ENCODE measurements at regions of chr2 and their contacts with region 1.

Region 1: GRCh38 chr2:177164584-177165052 is 48.0 kb upstream of the HNRNPA3 start:
- DNase-seq: peak; percentile 78
- H3K4me3 ChIP-seq: peak overlapping the region; percentile 35 to 59
- H3K27ac ChIP-seq: peak overlapping the region; percentile 39 to 43; a peak in 3 of 4 replicates
- H3K4me1 ChIP-seq: peaks cover 12 to 24% of the 10 kb centered on the region in 2 experiments; a peak in 3 of 4 replicates
- H3K27me3 ChIP-seq: no peaks in the 10 kb centered on the region
- CTCF ChIP-seq: peak; percentile 100
- EP300 ChIP-seq: peak in 1 of 2 experiments; percentile 11; a peak in 1 of 4 replicates
- RAD21 ChIP-seq: peak; percentile 99

Region 2: GRCh38 chr2:177183860-177184259 is 19.2 kb after region 1 on chr2:
- CTCF ChIA-PET with region 1: interaction called, 35 read pairs
- POLR2A ChIA-PET with region 1: no interaction called
- DNase-seq: no peak
- H3K4me3 ChIP-seq: no peak overlapping the region
- H3K27ac ChIP-seq: no peak overlapping the region
- H3K4me1 ChIP-seq: no peaks in the 10 kb centered on the region
- H3K27me3 ChIP-seq: no peaks in the 10 kb centered on the region
- CTCF ChIP-seq: no peak
- EP300 ChIP-seq: no peak
- RAD21 ChIP-seq: no peak

Region 3: DNA sequence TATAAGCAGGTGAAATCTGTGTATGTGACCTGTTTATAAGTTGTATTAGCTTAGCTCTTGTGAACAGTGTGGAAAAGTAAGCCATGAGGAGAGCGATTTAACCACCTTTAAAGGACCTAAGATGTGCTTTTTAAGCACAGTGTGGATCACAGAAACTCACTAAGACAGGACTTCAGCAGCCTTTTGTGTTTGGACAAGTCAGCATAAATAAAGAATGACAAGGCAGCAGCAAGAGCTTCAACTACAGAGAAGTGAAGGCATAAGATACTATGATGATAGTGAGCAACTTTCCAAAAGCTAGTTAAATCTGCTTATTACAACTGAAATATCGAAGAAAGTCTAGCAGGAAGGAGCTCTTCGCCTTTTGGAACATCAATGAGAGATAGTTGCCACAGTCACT is 56.9 kb after region 1 on chr2:
- CTCF ChIA-PET with region 1: interaction called, 10 read pairs
- POLR2A ChIA-PET with region 1: no interaction called
- DNase-seq: no peak
- H3K4me3 ChIP-seq: no peak overlapping the region
- H3K27ac ChIP-seq: peak overlapping the region in 1 of 2 experiments; percentile 18; a peak in 1 of 4 replicates
- H3K4me1 ChIP-seq: peaks cover 0 to 4% of the 10 kb centered on the region in 2 experiments; a peak in 1 of 4 replicates
- H3K27me3 ChIP-seq: no peaks in the 10 kb centered on the region
- CTCF ChIP-seq: no peak
- EP300 ChIP-seq: no peak
- RAD21 ChIP-seq: no peak

Region 4: GRCh38 chr2:177263451-177264208 is 99.0 kb after region 1 on chr2:
- CTCF ChIA-PET with region 1: interaction called, 121 read pairs
- POLR2A ChIA-PET with region 1: interaction called, 11 read pairs
- DNase-seq: peak; percentile 89
- H3K4me3 ChIP-seq: peak overlapping the region; percentile 71 to 93
- H3K27ac ChIP-seq: peak overlapping the region; percentile 97
- H3K4me1 ChIP-seq: peaks cover 17 to 22% of the 10 kb centered on the region in 2 experiments
- H3K27me3 ChIP-seq: no peaks in the 10 kb centered on the region
- CTCF ChIP-seq: peak; percentile 79
- EP300 ChIP-seq: no peak
- RAD21 ChIP-seq: peak; percentile 66

Region 5: DNA sequence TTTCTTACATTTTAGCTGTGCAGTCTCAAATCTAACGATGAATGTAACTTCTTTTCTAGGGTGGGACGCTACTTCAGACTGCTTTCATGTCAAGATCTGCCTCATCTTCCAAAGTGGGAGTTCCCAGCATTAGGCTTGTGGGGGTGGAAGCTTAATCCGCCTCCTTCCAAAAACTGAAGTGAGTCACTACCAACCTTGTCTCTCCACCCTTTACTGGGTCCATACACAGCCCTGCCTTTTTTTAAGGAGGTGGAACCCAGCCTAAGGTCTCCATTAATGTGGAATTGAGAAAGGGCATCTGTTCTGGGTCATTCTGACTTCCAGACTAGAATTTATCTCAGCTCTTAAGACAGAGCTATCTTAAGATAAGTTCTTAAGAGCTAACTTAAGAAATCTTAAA is 141.9 kb after region 1 on chr2:
- CTCF ChIA-PET with region 1: interaction called, 28 read pairs
- POLR2A ChIA-PET with region 1: no interaction called
- DNase-seq: no peak
- H3K4me3 ChIP-seq: no peak overlapping the region
- H3K27ac ChIP-seq: no peak overlapping the region
- H3K4me1 ChIP-seq: no peaks in the 10 kb centered on the region
- H3K27me3 ChIP-seq: no peaks in the 10 kb centered on the region
- CTCF ChIP-seq: no peak
- EP300 ChIP-seq: no peak
- RAD21 ChIP-seq: no peak

Region 6: GRCh38 chr2:177724398-177725287 is 560.0 kb after region 1 on chr2:
- CTCF ChIA-PET with region 1: interaction called, 31 read pairs
- POLR2A ChIA-PET with region 1: no interaction called
- DNase-seq: peak; percentile 60
- H3K4me3 ChIP-seq: peak overlapping the region in 1 of 2 experiments; percentile 53; a peak in 1 of 4 replicates
- H3K27ac ChIP-seq: no peak overlapping the region; a peak in 1 of 4 replicates
- H3K4me1 ChIP-seq: peaks cover 0 to 7% of the 10 kb centered on the region in 2 experiments; a peak in 1 of 4 replicates
- H3K27me3 ChIP-seq: no peaks in the 10 kb centered on the region
- CTCF ChIP-seq: peak; percentile 98
- EP300 ChIP-seq: no peak
- RAD21 ChIP-seq: peak; percentile 95

Region 7: GRCh38 chr2:177763532-177764265 is 599.1 kb after region 1 on chr2:
- CTCF ChIA-PET with region 1: interaction called, 25 read pairs
- POLR2A ChIA-PET with region 1: interaction called, 3 read pairs
- DNase-seq: peak; percentile 67
- H3K4me3 ChIP-seq: no peak overlapping the region
- H3K27ac ChIP-seq: no peak overlapping the region
- H3K4me1 ChIP-seq: peaks cover 0 to 4% of the 10 kb centered on the region in 2 experiments; a peak in 1 of 4 replicates
- H3K27me3 ChIP-seq: no peaks in the 10 kb centered on the region
- CTCF ChIP-seq: peak; percentile 78
- EP300 ChIP-seq: no peak
- RAD21 ChIP-seq: peak; percentile 54

Measured in SK-N-SH (cell line).